Right cardiac atrium (tissue), 5 donors: ENCODE measurements at regions of chr5 and their contacts with region 1.

Region 1: DNA sequence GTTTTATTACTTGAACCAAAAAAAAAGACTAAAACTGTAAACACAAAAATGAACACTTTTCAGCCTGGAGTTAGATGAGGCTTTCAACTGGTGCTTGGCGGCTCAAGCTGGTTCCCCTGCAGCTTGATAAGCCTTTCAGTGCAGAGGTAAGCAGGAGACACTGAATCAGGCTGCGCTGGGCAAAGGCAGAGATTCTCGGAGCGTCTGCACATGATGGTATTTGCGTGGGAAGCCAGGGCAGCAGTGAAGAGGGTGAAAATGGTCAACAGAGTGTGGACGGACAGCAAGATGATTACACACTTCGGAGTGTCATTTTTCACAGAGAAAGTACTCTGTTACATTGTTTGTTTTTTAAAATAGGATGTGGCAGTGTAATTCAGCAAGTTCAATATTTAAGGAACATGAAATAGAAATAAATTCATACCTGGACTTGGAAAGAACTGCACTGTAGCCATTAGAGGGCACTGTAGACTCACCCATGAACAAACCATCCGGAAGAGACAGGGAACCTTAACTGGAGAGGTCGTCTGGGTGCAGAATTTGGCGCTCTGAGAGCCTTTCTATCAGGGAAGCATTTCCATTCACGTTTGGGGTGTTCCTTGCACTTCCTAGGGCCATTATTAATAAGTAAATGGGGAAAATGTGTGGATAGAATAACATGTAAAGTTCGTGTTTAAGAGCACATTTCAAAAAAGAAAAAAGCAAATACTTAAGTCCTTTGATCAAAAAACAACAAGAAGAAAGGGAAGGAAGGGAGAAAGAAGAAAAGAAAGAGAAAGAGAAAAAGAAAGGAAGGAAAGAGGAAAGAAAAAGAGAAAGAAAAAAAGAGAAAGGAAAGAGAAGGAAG is 69.8 kb downstream of the ICE1 start:
- DNase-seq: no peak
- ATAC-seq: peak in 1 of 2 donors; percentile 26
- H3K4me3 ChIP-seq: no peak overlapping the region
- H3K27ac ChIP-seq: no peak overlapping the region
- H3K4me1 ChIP-seq: no peaks in the 10 kb centered on the region
- H3K27me3 ChIP-seq: no peaks in the 10 kb centered on the region

Region 2: GRCh38 chr5:3684771-3685354 is 1807.4 kb before region 1 on chr5:
- intact Hi-C with region 1: no loop called
- DNase-seq: no peak
- ATAC-seq: no peak
- H3K4me3 ChIP-seq: no peak overlapping the region
- H3K27ac ChIP-seq: no peak overlapping the region
- H3K4me1 ChIP-seq: no peaks in the 10 kb centered on the region
- H3K27me3 ChIP-seq: no peaks in the 10 kb centered on the region

Region 3: GRCh38 chr5:5886812-5887486 is 394.6 kb after region 1 on chr5:
- intact Hi-C with region 1: loop called in 2 of 4 experiments (anchors 10 kb)
- DNase-seq: no peak
- ATAC-seq: peak in 1 of 2 donors; percentile 57
- H3K4me3 ChIP-seq: no peak overlapping the region
- H3K27ac ChIP-seq: no peak overlapping the region
- H3K4me1 ChIP-seq: no peaks in the 10 kb centered on the region
- H3K27me3 ChIP-seq: no peaks in the 10 kb centered on the region

Region 4: GRCh38 chr5:6525910-6526309 is 1033.6 kb after region 1 on chr5:
- intact Hi-C with region 1: loop called in 1 of 4 experiments (anchors 10 kb)
- DNase-seq: no peak
- ATAC-seq: peak; percentile 48 to 61
- H3K4me3 ChIP-seq: no peak overlapping the region
- H3K27ac ChIP-seq: no peak overlapping the region
- H3K4me1 ChIP-seq: no peaks in the 10 kb centered on the region
- H3K27me3 ChIP-seq: no peaks in the 10 kb centered on the region

Region 5: DNA sequence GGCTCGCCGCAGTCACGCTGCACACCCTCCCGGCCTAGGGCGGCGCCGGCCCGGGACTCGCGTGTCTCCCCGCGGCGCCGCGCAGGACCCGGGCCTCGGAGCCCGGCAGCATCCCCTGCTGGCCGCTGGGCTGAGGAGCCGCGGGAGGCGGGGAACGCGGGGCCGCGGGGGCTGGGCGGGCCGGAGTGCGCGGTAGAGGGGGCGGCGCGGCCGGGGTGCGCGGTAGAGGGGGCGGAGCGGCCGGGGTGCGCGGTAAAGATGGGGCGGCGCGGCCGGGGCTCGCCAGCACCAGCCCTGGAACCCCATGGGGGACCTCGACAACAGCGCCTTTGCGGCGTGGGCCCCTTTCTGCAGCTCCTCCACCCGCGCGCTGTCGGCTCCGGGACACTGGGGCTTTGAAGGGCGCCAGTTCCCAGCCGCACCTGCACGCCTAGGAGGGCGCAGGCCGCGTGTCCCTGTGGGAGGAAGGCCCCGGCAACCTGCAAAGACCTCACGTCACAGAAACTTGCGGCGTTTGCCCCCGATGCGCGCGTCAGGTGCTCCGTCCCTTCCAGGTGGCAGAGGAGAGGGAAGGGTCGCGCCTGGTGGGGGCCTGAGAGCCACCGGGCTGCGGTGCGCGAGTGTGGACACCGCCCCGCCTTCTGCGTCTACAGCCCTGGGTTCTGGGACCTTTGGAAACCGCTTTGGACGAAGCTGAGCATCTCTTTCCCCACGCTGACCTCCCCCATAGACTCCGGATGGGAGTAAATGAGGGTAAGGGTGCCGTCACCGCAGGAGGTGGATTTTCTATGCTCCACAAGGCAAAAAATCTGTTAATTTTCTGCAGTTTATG is 1091.0 kb after region 1 on chr5:
- intact Hi-C with region 1: loop called in 2 of 4 experiments (anchors 5 to 10 kb)
- DNase-seq: peak; percentile 47 to 85 (median 82)
- ATAC-seq: peak; percentile 91 to 94
- H3K4me3 ChIP-seq: peak overlapping the region; percentile 44
- H3K27ac ChIP-seq: no peak overlapping the region
- H3K4me1 ChIP-seq: no peaks in the 10 kb centered on the region
- H3K27me3 ChIP-seq: no peaks in the 10 kb centered on the region